ENCODE measurements at regions of chr14 and their contacts with region 1.

Region 1: DNA sequence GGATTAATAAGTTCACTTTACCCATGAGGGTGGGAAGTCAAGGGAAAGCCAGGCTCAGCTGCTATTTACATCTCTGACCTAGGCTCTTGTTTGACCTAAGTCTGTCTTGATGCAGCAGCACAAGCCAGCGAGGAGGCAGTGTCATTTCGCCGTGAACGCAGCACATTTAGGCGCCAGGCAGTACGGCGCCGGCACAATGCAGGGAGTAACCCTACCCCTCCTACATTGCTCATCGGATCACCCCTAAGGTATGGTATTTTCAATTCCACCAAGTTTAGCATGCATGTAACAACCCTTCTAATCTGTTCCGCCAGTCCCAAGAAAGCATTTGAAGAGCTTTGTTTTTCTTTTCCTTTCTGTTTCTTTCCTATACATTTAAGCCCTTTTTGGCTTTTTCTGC is 81.2 kb downstream of the PCNX1 start:
- DNase-seq: peak in 4 of 5 donors; percentile 22 to 47 (median 27)
- H3K4me3 ChIP-seq: peak overlapping the region; percentile 21 to 71
- H3K4me3 Mint-ChIP-seq: peak overlapping the region; percentile 81 to 89 (median 87)
- H3K27ac ChIP-seq: peak overlapping the region; percentile 50
- H3K27ac Mint-ChIP-seq: peak overlapping the region; percentile 79 to 92 (median 85)
- H3K4me1 ChIP-seq: peaks cover 56% of the 10 kb centered on the region
- H3K4me1 Mint-ChIP-seq: peaks cover 28 to 61% (median 45%) of the 10 kb centered on the region in 4 donors
- H3K27me3 ChIP-seq: no peaks in the 10 kb centered on the region
- H3K27me3 Mint-ChIP-seq: no peaks in the 10 kb centered on the region

Region 2: DNA sequence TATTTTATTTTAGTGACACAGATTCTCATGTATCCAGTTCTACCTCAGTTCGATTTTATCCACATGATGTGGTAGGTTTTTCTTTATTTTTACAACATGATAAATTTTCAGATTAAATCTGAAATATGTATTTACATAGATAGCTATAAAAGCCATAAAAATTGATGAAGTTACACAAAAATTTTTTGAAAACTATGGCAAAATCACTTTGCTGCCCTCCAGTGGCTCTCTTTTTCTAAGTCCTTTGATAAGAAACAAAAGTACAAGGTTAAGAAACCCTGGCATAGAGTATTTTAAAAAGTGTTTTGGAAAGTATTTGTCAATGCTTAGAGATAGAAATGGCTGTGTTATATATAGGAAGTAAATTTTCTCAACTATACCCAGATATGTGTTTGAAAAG is 23.0 kb after region 1 on chr14:
- CTCF ChIA-PET with region 1: interaction called, 15 read pairs
- POLR2A ChIA-PET with region 1: interaction called, 5 read pairs
- intact Hi-C with region 1: loop called (anchors 2 kb)
- DNase-seq: peak in 4 of 5 donors; percentile 9 to 25 (median 22)
- H3K4me3 ChIP-seq: no peak overlapping the region
- H3K4me3 Mint-ChIP-seq: peak overlapping the region in 3 of 8 donors; percentile 15 to 55 (median 36)
- H3K27ac ChIP-seq: no peak overlapping the region
- H3K27ac Mint-ChIP-seq: peak overlapping the region in 6 of 7 donors; percentile 38 to 81 (median 70)
- H3K4me1 ChIP-seq: peaks cover 31% of the 10 kb centered on the region
- H3K4me1 Mint-ChIP-seq: peaks cover 35 to 69% (median 49%) of the 10 kb centered on the region in 4 donors
- H3K27me3 ChIP-seq: no peaks in the 10 kb centered on the region
- H3K27me3 Mint-ChIP-seq: no peaks in the 10 kb centered on the region

Region 3: GRCh38 chr14:71138448-71139293 is 150.2 kb after region 1 on chr14:
- CTCF ChIA-PET with region 1: no interaction called
- POLR2A ChIA-PET with region 1: no interaction called
- intact Hi-C with region 1: no loop called
- DNase-seq: peak; percentile 40 to 58 (median 48)
- H3K4me3 ChIP-seq: no peak overlapping the region
- H3K4me3 Mint-ChIP-seq: no peak overlapping the region
- H3K27ac ChIP-seq: no peak overlapping the region
- H3K27ac Mint-ChIP-seq: peak overlapping the region in 1 of 7 donors; percentile 10
- H3K4me1 ChIP-seq: peaks cover 25% of the 10 kb centered on the region
- H3K4me1 Mint-ChIP-seq: peaks cover 14 to 23% (median 22%) of the 10 kb centered on the region in 4 donors
- H3K27me3 ChIP-seq: no peaks in the 10 kb centered on the region
- H3K27me3 Mint-ChIP-seq: peaks cover 0 to 3% of the 10 kb centered on the region in 2 donors

Region 4: DNA sequence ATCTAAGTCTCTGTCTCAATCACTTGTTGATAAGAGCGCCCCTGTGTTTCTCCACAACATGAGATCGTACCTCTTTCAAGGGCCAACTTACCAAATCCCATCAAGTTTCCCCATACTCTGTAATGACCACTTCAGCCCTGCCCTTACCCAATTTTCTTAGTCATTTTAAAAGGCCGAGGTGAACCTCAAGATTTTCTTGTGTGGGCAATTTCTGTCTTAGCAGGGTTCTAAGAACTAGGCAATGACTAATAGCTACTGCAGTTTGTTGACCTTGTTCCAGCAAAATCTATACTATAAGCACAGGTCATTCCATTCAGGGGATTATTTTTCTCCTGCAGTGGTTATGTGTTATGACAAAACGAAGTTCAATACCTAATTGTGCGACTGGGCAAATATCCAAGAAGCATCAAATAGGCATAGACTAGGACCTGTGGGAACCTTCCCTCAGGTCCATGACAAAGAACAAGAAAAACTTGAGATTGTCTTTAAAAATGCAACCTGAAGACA is 278.6 kb after region 1 on chr14:
- CTCF ChIA-PET with region 1: no interaction called
- POLR2A ChIA-PET with region 1: no interaction called
- intact Hi-C with region 1: no loop called
- DNase-seq: no peak
- H3K4me3 ChIP-seq: peak overlapping the region; percentile 5 to 34
- H3K4me3 Mint-ChIP-seq: peak overlapping the region; percentile 79 to 89 (median 86)
- H3K27ac ChIP-seq: no peak overlapping the region
- H3K27ac Mint-ChIP-seq: peak overlapping the region in 5 of 7 donors; percentile 41 to 91 (median 83)
- H3K4me1 ChIP-seq: peaks cover 8% of the 10 kb centered on the region
- H3K4me1 Mint-ChIP-seq: peaks cover 9 to 18% (median 12%) of the 10 kb centered on the region in 4 donors
- H3K27me3 ChIP-seq: no peaks in the 10 kb centered on the region
- H3K27me3 Mint-ChIP-seq: no peaks in the 10 kb centered on the region